Heart left ventricle (tissue), 16 donors: ENCODE measurements at regions of chr4 and their contacts with region 1.

Region 1: DNA sequence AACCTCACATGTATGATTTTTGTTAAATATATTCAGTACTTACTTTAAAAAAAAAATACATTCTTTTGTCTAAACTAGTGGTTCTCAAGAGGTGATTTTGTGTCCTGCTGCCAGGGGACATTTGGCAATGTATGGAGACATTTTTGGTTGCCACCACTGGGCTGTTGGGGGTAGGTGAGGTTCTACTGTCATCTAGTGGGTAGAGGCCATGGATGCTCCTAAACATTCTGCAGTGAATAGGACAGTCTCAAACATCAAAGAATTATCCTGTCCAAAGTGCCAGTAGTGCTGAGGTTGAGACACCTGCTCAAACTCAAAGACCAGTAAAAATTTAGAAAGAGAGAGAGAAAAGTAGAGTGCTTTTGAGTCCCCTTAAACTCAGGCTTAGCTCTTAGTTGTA is 32.9 kb upstream of the PGM2 start:
- DNase-seq: peak in 1 of 5 donors; percentile 18
- ATAC-seq: peak; percentile 86 to 90 (median 86)
- H3K4me3 ChIP-seq: no peak overlapping the region
- H3K27ac ChIP-seq: no peak overlapping the region
- H3K4me1 ChIP-seq: peaks cover 0 to 6% (median 0%) of the 10 kb centered on the region in 12 donors
- H3K27me3 ChIP-seq: peaks cover 0 to 2% (median 0%) of the 10 kb centered on the region in 9 donors
- CTCF ChIP-seq: peak; percentile 36 to 78 (median 66)
- POLR2A ChIP-seq: no peak

Region 2: DNA sequence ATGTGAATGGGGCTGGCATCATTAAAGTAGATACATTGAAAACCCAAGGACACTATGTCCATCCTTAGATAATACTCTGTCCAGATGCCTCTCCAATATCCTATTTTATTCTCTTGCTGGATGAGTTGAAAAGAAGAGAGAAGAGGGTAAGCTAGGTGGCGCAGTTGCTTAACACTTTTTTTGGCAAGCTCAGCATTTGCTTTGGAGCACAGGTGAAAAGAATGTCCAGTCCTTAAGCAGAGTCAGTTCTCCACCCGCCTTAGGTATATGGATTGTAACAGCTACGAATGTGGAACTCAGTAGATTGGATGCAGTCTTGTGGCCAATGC is 340.6 kb before region 1 on chr4:
- intact Hi-C with region 1: loop called in 5 of 10 experiments (anchors 1 to 10 kb)
- DNase-seq: peak in 2 of 5 donors; percentile 9 to 27
- ATAC-seq: peak; percentile 55 to 85 (median 66)
- H3K4me3 ChIP-seq: peak overlapping the region in 8 of 12 donors; percentile 45 to 63 (median 53)
- H3K27ac ChIP-seq: no peak overlapping the region
- H3K4me1 ChIP-seq: peaks cover 0 to 15% (median 6%) of the 10 kb centered on the region in 12 donors
- H3K27me3 ChIP-seq: peaks cover 6 to 76% (median 19%) of the 10 kb centered on the region in 9 donors
- CTCF ChIP-seq: peak in 11 of 12 donors; percentile 16 to 58 (median 44)
- POLR2A ChIP-seq: no peak

Region 3: GRCh38 chr4:37603070-37603468 is 190.5 kb before region 1 on chr4:
- intact Hi-C with region 1: loop called (anchors 1 to 5 kb)
- DNase-seq: peak; percentile 80 to 92 (median 82)
- ATAC-seq: peak; percentile 89 to 96 (median 96)
- H3K4me3 ChIP-seq: no peak overlapping the region
- H3K27ac ChIP-seq: no peak overlapping the region
- H3K4me1 ChIP-seq: peaks cover 0 to 19% (median 0%) of the 10 kb centered on the region in 12 donors
- H3K27me3 ChIP-seq: no peaks in the 10 kb centered on the region
- CTCF ChIP-seq: peak; percentile 97 to 99 (median 98)
- POLR2A ChIP-seq: no peak

Region 4: GRCh38 chr4:37693450-37694190 is 99.9 kb before region 1 on chr4:
- intact Hi-C with region 1: loop called in 2 of 10 experiments (anchors 5 to 10 kb)
- DNase-seq: no peak
- ATAC-seq: no peak
- H3K4me3 ChIP-seq: no peak overlapping the region
- H3K27ac ChIP-seq: no peak overlapping the region
- H3K4me1 ChIP-seq: no peaks in the 10 kb centered on the region
- H3K27me3 ChIP-seq: no peaks in the 10 kb centered on the region
- CTCF ChIP-seq: no peak
- POLR2A ChIP-seq: no peak

Region 5: DNA sequence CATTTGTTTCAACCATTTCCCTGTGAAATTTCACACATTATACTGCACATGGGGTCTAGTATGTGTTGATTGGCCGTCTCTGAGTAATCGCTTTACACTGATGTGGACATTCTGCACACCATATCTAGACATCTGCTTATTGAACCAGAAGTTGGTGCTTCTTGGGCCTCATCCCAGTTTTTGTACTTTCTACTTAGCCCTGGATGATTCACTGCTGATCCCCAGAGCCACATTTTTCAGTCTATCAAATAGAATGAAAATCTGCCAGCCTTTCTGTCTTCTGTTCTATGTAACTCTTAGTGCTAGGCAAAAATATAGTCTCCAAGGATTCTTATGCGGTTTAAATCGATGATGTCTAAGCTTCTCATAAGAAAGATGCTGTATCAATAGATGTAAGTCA is 66.9 kb before region 1 on chr4:
- intact Hi-C with region 1: no loop called
- DNase-seq: no peak
- ATAC-seq: no peak
- H3K4me3 ChIP-seq: no peak overlapping the region
- H3K27ac ChIP-seq: no peak overlapping the region
- H3K4me1 ChIP-seq: no peaks in the 10 kb centered on the region
- H3K27me3 ChIP-seq: no peaks in the 10 kb centered on the region
- CTCF ChIP-seq: no peak
- POLR2A ChIP-seq: no peak